HEK293T (cell line): ENCODE measurements at regions of chr1 and their contacts with region 1.

Region 1: GRCh38 chr1:35079003-35079930 is at the start of gene ZMYM1:
- DNase-seq: peak; percentile 98

Region 2: DNA sequence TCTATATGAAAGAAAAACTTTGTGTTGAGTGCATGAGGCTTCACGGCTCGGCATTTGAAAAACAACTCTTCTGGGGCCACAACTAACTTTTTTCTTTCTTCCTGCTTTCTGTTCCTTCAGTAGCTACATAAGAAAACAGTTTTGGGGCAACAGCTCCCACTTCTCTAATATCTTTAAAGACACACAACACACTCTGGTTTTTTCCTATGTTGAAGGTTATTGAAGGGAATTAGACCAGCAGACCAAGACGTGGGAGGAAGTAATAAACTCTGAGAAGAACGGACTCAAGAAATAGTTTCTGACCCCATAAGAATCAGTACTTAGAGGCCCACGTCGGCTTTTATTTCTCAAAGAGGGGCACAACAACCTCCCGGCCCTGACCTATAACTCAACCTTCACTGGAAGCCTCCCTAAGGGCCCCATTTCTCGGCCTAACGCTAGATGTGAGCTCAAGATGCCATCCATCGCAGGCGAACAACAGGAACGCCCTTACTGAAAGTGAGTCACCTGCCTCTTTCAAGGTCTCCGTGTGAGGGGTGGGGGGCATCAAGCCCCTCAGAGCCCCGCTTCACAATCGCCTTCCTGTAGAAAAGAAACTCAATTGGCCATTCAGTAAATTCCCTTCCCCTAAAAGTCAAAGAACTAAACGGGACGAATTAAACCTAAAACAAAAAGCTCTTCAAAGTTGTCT is 48.4 kb before region 1 on chr1:
- CTCF ChIA-PET with region 1: no interaction called
- POLR2A ChIA-PET with region 1: interaction called, 17 read pairs
- DNase-seq: peak; percentile 33